ENCODE measurements at regions of chr11 and their contacts with region 1.

Region 1: DNA sequence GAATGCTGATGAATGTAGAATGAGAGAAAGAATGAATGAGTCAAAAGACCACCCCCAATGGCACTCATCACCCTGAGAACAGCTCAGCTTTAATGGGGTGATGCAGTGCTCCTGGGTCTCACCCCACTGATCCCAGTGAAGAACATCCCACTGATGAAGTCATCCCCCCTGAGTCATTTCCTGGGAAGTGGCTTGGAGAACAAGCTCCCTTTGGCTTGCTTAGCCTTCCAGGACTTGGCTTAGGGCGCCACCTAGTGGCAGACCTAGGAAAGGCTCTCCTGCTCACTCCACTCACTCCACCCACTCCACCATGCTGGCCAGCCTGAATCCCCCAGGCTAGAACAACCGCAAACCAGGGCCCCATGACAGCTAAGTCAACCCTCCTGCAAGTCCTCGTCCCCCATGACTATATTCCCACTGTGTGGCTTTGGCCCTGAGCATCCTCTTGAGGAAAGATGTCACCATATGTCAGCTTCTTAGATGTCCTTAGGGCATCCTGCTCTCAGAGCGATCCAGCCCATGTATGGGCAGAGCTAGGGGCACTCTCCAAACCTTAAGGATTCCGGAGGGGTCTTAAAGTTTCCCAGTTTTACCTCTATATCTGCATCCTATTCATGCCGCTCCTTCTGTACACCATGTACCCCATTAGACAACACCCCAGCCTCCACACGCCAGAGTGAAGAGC is 17.8 kb upstream of the TMPRSS13 start:
- DNase-seq: peak; percentile 60 to 87 (median 78)
- ATAC-seq: no peak
- H3K4me3 Mint-ChIP-seq: peak overlapping the region in 9 of 10 donors; percentile 26 to 82 (median 44)
- H3K27ac Mint-ChIP-seq: peak overlapping the region; percentile 9 to 89 (median 69)
- H3K4me1 Mint-ChIP-seq: peaks cover 34 to 74% (median 67%) of the 10 kb centered on the region in 4 donors
- H3K27me3 Mint-ChIP-seq: peaks cover 0 to 2% (median 0%) of the 10 kb centered on the region in 5 donors

Region 2: DNA sequence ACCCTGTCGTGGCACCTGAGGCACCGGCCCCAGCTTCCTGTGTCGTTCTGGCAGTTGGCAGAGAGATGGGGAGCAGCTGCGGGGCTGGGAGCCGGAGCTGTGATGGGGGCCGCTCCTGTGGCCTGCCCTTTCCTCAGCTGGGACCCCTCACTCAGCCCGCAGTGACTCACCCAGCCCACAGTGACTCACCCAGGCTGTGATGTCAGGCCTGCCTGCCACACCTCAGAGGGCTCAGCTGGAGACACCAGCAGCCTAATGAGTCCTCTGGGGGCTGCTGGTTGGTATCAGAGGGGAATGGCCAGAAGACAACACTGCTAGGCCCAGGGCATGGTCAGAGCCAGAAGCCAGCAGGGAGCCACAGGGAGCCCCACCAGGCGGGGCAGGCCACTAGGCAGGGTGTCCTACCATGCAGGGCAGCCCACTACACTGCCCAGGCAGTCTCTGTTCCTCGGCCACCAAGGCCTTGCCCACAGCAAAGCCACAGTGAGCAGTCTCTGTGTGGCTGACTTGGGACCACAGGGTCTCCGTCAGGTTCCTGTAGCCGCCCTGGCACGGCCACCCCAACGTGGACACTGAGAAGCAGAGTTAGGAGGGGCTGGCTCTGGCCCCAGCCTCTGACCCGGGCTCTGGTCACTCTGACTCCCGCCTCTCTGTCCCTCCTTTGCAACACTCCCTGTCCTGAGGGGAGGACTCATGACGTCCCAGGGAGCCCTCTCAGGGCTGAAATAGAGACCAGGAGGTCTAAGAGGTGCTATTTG is 118.2 kb before region 1 on chr11:
- POLR2A ChIA-PET with region 1: interaction called, 54 read pairs
- DNase-seq: peak; percentile 38 to 93 (median 62)
- ATAC-seq: peak; percentile 81 to 89
- H3K4me3 Mint-ChIP-seq: peak overlapping the region; percentile 15 to 76 (median 60)
- H3K27ac Mint-ChIP-seq: peak overlapping the region; percentile 71 to 90 (median 86)
- H3K4me1 Mint-ChIP-seq: peaks cover 40 to 85% (median 76%) of the 10 kb centered on the region in 4 donors
- H3K27me3 Mint-ChIP-seq: no peaks in the 10 kb centered on the region

Region 3: DNA sequence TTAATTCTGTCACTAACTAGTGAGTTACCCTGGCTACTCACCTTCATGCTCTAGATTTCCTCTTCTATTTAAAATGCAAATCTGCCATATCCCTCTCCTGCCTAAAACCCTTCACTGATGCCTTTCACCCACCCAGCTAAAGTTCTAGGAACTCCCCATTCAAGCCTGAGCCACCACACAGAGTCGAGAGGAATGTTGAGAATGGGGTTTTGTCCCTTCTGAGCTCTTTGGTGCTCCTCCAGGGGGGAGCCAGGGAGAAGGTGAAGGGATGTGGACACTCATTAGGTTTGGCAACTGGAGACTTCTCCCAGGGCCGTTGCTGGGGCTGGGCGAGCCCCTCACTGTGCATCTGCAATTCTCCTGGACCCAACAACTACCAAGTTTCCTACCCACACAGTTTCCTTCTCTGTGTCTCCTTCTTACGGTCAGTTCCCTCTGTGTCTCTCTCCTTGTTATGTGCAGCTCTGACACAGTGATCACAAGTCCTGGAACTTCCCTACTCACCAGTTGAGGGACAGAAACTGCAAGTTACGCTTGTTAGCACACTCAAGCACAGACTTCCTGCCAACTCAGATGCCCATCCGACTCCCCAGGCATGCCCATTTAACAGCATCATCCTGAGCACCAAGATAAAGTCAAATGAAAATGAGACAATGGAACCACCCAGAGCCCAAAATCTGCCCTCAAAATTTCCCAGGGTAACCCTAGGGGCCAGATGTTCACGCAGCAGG is 32.7 kb after region 1 on chr11:
- POLR2A ChIA-PET with region 1: interaction called, 271 read pairs
- DNase-seq: no peak
- ATAC-seq: peak; percentile 45 to 67
- H3K4me3 Mint-ChIP-seq: peak overlapping the region; percentile 2 to 67 (median 41)
- H3K27ac Mint-ChIP-seq: peak overlapping the region; percentile 24 to 91 (median 74)
- H3K4me1 Mint-ChIP-seq: peaks cover 38 to 87% (median 69%) of the 10 kb centered on the region in 4 donors
- H3K27me3 Mint-ChIP-seq: no peaks in the 10 kb centered on the region

Region 4: GRCh38 chr11:118002541-118003423 is 55.8 kb after region 1 on chr11:
- POLR2A ChIA-PET with region 1: interaction called, 309 read pairs
- DNase-seq: peak in 1 of 10 donors; percentile 22
- ATAC-seq: peak; percentile 16 to 61
- H3K4me3 Mint-ChIP-seq: peak overlapping the region; percentile 49 to 83 (median 66)
- H3K27ac Mint-ChIP-seq: peak overlapping the region; percentile 84 to 100 (median 92)
- H3K4me1 Mint-ChIP-seq: peaks cover 64 to 96% (median 92%) of the 10 kb centered on the region in 4 donors
- H3K27me3 Mint-ChIP-seq: no peaks in the 10 kb centered on the region

Region 5: GRCh38 chr11:118046051-118046963 is 99.3 kb after region 1 on chr11:
- POLR2A ChIA-PET with region 1: interaction called, 188 read pairs
- DNase-seq: peak in 8 of 10 donors; percentile 23 to 79 (median 58)
- ATAC-seq: peak; percentile 86 to 93
- H3K4me3 Mint-ChIP-seq: peak overlapping the region in 8 of 10 donors; percentile 25 to 67 (median 62)
- H3K27ac Mint-ChIP-seq: peak overlapping the region; percentile 89 to 98 (median 94)
- H3K4me1 Mint-ChIP-seq: peaks cover 48 to 95% (median 88%) of the 10 kb centered on the region in 4 donors
- H3K27me3 Mint-ChIP-seq: no peaks in the 10 kb centered on the region

Region 6: DNA sequence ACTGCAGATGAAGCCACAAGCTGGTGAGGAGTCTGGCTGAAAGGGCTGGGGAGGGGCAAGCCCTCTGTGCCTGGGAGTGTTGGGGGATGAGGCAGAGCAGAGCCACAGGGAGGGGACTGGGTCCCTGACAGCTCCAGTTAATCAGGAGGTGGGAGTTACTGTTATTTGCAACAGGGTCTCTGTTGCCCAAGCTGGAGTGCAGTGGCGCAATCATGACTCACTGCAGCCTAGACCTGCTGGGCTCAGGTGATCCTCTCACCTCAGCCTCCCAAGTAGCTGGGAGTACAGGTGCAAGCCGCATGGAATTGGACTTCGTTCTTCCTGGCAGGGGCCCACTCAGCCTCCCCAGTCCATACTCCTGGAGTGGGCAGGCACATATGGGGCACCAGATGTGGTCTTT is 221.8 kb after region 1 on chr11:
- POLR2A ChIA-PET with region 1: no interaction called
- DNase-seq: no peak
- ATAC-seq: no peak
- H3K4me3 Mint-ChIP-seq: no peak overlapping the region
- H3K27ac Mint-ChIP-seq: peak overlapping the region in 1 of 10 donors; percentile 47
- H3K4me1 Mint-ChIP-seq: peaks cover 2 to 9% (median 5%) of the 10 kb centered on the region in 4 donors
- H3K27me3 Mint-ChIP-seq: peaks cover 0 to 15% (median 3%) of the 10 kb centered on the region in 5 donors

Measured in naive thymus-derived CD8-positive, alpha-beta T cell (primary cell).